Right ventricle myocardium superior (tissue), 1 donor: ENCODE measurements at regions of chr10 and their contacts with region 1.

Region 1: GRCh38 chr10:91220194-91220953 is at the start of gene PCGF5:
- DNase-seq: peak; percentile 95
- ATAC-seq: peak; percentile 99
- total RNA-seq, gene PCGF5: 56.0 TPM

Region 2: DNA sequence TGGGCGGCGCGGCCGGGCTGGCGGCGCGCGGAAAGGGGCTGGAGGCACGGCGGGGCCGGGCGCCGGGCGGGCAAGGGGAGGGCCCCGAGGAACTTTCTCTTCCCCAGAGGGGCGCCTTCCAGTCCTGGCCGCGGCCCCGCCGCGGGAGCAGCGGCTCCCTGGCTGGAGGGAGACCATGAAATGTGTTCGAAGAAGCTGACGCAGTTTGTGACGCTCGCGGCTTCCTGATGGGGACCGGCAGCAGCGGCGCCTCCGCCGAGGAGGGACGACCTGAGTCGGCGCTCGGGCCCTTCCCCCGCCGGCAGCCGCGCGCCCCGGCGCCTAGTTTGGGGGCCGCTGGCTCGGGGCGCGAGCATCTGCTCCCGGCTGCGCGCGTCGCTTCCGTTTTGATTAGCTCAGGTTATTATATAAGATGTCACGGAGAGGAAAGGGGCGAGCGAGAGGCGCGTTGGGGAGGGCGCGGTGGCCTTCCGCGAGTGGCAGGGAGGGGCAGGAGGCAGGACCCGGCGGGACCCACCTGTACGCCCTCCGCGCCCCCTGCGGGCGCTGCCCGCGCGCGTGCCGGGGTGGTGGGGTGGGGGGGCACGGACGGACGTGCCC is 57.0 kb before region 1 on chr10:
- intact Hi-C with region 1: loop called (anchors 10 kb)
- DNase-seq: peak; percentile 83
- ATAC-seq: peak; percentile 55